Mammary epithelial cell (primary cell): ENCODE measurements at regions of chr18 and their contacts with region 1.

Region 1: GRCh38 chr18:21704603-21705364 is at the start of gene ABHD3:
- DNase-seq: peak; percentile 91
- H3K4me3 ChIP-seq: peak within 1 kb of the TSS; percentile 72 to 87 (median 72)
- H3K27ac ChIP-seq: peak within 1 kb of the TSS; percentile 84
- H3K4me1 ChIP-seq: peaks cover 9% of the 10 kb centered on the region
- H3K27me3 ChIP-seq: no peaks in the 10 kb centered on the region
- CTCF ChIP-seq: peak in 1 of 2 donors; percentile 53
- total RNA-seq, gene ABHD3: 14.7 to 19.6 TPM

Region 2: GRCh38 chr18:21557607-21558253 is 147.1 kb before region 1 on chr18:
- CTCF ChIA-PET with region 1: no interaction called
- dilution Hi-C with region 1: no loop called
- in situ Hi-C with region 1: no loop called
- intact Hi-C with region 1: loop called (anchors 5 kb)
- DNase-seq: peak; percentile 23
- H3K4me3 ChIP-seq: no peak overlapping the region
- H3K27ac ChIP-seq: peak overlapping the region; percentile 40
- H3K4me1 ChIP-seq: no peaks in the 10 kb centered on the region
- H3K27me3 ChIP-seq: no peaks in the 10 kb centered on the region
- CTCF ChIP-seq: no peak

Region 3: GRCh38 chr18:21612125-21612991 is 92.4 kb before region 1 on chr18 and contains the start of gene SNRPD1:
- CTCF ChIA-PET with region 1: no interaction called
- dilution Hi-C with region 1: no loop called
- in situ Hi-C with region 1: no loop called
- intact Hi-C with region 1: loop called (anchors 1 kb)
- DNase-seq: peak; percentile 90
- H3K4me3 ChIP-seq: peak within 1 kb of the TSS; percentile 72 to 100 (median 100)
- H3K27ac ChIP-seq: peak within 1 kb of the TSS; percentile 97
- H3K4me1 ChIP-seq: peaks cover 12% of the 10 kb centered on the region
- H3K27me3 ChIP-seq: no peaks in the 10 kb centered on the region
- CTCF ChIP-seq: peak; percentile 87 to 98
- total RNA-seq, gene SNRPD1: 7.5 to 68.6 TPM

Region 4: DNA sequence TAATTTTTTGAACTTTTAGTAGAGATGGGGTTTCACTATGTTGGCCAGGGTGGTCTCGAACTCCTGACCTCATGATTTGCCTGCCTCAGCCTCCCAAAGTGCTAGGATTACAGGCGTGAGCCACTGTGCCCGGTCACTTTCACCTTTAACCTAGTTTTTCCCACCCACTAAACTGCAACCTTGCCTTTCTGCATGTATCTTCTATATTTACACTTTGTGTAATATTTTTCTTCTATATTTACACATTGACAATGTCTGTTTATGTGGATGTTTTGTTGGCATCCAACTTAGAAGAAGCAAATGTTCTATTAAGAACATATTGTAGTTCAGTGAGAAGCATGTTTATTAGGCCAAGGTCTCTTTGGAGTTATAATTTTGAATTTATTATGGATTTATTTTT is 66.0 kb before region 1 on chr18:
- CTCF ChIA-PET with region 1: no interaction called
- dilution Hi-C with region 1: loop called (anchors 5 kb)
- in situ Hi-C with region 1: loop called in 1 of 2 experiments (anchors 10 kb)
- intact Hi-C with region 1: loop called (anchors 1 kb)
- DNase-seq: no peak
- H3K4me3 ChIP-seq: no peak overlapping the region
- H3K27ac ChIP-seq: no peak overlapping the region
- H3K4me1 ChIP-seq: peaks cover 13% of the 10 kb centered on the region
- H3K27me3 ChIP-seq: no peaks in the 10 kb centered on the region
- CTCF ChIP-seq: no peak

Region 5: DNA sequence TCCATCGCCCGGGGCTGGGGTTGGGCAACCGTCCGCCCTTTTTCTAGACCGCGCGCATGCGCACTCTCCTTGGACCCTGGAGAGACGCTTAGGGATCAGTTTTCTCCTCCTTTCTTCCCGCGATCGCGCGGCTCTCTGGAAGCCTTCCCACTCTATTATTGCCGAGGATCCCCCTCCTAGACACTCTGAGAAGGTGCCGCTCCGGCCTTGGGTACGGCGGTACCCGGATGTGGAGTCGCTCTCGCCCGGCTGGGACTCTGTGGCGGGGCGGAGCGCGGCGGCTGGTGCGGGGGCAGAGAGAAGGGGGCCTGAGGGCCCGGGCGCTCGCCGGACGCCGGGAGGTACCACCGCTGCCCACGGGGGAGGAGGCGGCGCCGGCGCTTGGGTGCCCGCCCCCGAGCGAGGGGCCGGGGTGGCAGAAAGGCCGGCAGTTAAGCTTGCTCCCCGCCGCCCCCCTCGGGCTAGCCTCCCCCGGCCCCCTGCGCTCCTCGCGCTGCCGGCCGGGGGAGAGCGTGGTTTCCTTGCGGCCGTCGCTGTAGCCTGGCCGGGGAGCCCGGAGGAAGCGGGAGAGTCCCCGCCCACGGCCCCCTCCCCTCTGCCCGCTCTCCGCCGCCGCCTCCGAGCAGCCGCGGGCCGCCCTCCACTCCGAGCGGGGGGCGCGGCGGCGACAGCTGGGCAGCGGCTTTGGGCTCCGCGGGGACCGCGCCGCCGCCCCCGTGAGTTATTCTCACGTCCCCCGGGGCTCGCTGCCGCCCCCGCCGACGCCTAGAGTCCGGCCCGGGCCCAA is 36.1 kb after region 1 on chr18 and contains the start of gene MIB1:
- CTCF ChIA-PET with region 1: no interaction called
- dilution Hi-C with region 1: no loop called
- in situ Hi-C with region 1: no loop called
- intact Hi-C with region 1: loop called (anchors 1 kb)
- DNase-seq: peak; percentile 95
- H3K4me3 ChIP-seq: peak within 1 kb of the TSS; percentile 61 to 94 (median 79)
- H3K27ac ChIP-seq: peak within 1 kb of the TSS; percentile 91
- H3K4me1 ChIP-seq: peaks cover 7% of the 10 kb centered on the region
- H3K27me3 ChIP-seq: no peaks in the 10 kb centered on the region
- CTCF ChIP-seq: no peak
- total RNA-seq, gene MIB1: 46.8 to 64.0 TPM

Region 6: DNA sequence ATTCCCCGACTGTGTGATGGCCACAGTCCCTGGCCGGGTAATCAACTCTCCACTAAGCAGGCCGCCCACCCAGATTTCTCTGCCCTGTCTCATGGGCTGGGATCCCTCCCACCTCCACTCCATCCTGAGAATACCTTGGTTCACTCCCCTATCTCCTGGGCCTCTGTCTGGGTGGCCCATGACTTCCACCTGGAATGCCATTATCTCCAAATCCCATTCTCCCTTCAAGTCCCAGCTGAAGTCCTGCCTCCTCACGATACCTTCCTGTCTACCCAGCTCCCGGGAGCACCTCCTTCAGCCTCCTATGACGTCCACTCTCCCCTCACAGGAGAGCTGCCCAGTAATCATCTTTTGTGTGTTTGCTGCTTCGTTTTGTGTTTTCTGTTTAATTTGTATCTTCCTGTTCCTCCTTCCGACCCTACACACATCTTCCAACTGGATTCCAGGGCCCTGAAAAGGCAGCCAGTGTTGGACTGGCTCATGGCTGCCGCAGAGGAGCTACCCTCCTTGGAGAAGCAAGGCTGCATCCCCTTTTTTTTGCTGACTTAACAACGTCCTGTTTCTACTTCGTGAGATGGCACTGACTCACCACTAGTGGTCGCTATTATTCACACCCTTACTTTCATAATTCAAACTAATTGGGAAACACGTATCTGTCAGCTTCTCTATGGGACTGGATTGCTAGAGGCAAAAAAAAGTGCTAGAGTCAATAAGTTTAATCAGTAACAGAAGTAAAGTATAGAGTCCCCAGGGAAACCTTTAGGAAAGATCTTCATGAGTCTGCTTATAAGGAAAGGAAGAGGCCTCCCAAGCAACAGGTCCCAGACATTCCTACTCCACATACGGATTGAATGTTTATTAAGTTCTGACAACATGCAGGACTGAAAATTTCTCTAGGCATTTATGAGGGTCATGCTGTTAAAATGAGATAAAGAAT is 292.7 kb after region 1 on chr18:
- CTCF ChIA-PET with region 1: no interaction called
- dilution Hi-C with region 1: no loop called
- in situ Hi-C with region 1: no loop called
- intact Hi-C with region 1: no loop called
- DNase-seq: peak; percentile 32
- H3K4me3 ChIP-seq: no peak overlapping the region
- H3K27ac ChIP-seq: no peak overlapping the region
- H3K4me1 ChIP-seq: no peaks in the 10 kb centered on the region
- H3K27me3 ChIP-seq: no peaks in the 10 kb centered on the region
- CTCF ChIP-seq: peak; percentile 82 to 96